Psoas muscle (tissue), 8 donors: ENCODE measurements at regions of chr22 and their contacts with region 1.

Region 1: DNA sequence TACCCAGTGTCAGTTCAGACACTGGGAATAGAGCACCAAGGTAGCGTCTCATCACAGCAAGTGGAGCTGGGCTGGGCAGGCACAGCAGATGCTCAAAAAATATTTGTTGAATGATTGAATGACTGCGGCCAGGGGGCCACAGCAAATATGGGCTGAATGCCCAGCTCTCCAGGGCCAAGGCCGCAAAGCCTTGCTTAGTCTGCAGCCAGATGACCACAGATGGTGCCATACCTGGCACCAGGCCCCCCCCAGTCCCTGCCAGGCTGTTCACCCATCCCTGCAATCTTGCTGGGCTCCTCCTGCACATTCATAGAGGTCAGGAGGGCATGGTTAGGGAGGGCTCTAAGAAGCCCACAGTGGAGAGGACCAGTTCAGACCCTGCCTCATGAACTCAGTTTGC is 32.9 kb downstream of the ZC3H7B start:
- DNase-seq: peak in 1 of 2 donors; percentile 37
- ATAC-seq: peak; percentile 62 to 79 (median 74)
- H3K4me3 ChIP-seq: no peak overlapping the region
- H3K27ac ChIP-seq: no peak overlapping the region
- H3K4me1 ChIP-seq: peaks cover 4% of the 10 kb centered on the region
- H3K27me3 ChIP-seq: no peaks in the 10 kb centered on the region
- CTCF ChIP-seq: no peak

Region 2: GRCh38 chr22:41367039-41367679 is 32.9 kb after region 1 on chr22:
- intact Hi-C with region 1: loop called in 1 of 2 experiments (anchors 2 kb)
- DNase-seq: peak; percentile 98 to 99
- ATAC-seq: peak; percentile 90 to 94 (median 92)
- H3K4me3 ChIP-seq: peak overlapping the region; percentile 59
- H3K27ac ChIP-seq: peak overlapping the region; percentile 77
- H3K4me1 ChIP-seq: peaks cover 42% of the 10 kb centered on the region
- H3K27me3 ChIP-seq: no peaks in the 10 kb centered on the region
- CTCF ChIP-seq: peak; percentile 39